ENCODE measurements at regions of chr12 and their contacts with region 1.

Region 1: DNA sequence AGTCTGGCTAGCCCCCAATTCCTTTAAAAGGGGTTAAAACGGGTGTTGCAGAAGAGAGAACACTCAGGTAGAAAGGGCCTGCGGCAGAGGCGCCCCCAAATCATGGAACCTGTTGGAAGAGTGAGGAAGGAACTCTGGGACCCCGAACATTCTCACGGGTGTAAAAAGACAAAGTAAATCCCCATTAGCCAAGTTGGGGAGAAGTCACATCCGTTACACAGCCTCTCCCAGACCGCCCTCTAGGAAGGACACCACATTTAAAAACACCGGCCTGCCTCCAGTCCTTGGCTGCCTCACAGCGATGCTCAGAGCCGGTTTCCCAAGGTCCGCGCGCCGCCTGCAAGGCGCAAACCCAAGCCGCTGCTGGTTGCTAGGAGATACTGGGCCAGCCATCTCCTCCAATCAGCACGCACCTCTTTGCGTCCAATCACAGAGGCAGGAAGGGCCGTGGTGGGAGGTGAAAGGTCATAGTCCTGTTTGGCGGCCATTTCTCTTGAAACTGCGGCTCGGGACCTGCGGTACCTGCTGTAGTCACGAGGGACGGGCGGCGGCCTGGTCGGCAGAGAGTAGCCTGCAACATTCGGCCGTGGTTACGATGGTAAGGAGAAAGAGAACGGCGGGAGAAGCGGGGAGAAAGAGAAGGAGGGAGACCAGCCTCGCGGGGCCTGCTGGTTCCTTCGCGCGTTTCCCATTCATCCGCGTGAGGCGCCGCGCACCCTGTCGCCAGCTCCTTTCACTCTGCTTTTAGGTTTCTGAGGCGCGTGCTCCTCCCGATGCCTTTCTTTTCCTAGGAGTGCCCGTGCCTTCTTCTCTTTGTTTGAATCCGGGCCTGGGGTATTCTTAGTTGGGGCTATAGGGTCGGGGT is at the start of gene SNRPF:
- DNase-seq: peak; percentile 91 to 97
- H3K4me3 ChIP-seq: peak within 1 kb of the TSS; percentile 96 to 98 (median 97)
- H3K27ac ChIP-seq: peak within 1 kb of the TSS; percentile 89
- H3K4me1 ChIP-seq: peaks cover 0 to 4% (median 2%) of the 10 kb centered on the region in 4 experiments; a peak in 3 of 7 replicates
- H3K27me3 ChIP-seq: no peaks in the 10 kb centered on the region
- CTCF ChIP-seq: peak in 1 of 3 experiments; percentile 6; a peak in 1 of 4 replicates
- EP300 ChIP-seq: no peak
- POLR2A ChIP-seq: peak; percentile 62 to 87
- RAD21 ChIP-seq: 0 out of 4 replicates have a peak, but pooled peaks have one; percentile 2 to 5
- total RNA-seq, gene SNRPF: 79.7 and 87.7 TPM in 2 replicates

Region 2: DNA sequence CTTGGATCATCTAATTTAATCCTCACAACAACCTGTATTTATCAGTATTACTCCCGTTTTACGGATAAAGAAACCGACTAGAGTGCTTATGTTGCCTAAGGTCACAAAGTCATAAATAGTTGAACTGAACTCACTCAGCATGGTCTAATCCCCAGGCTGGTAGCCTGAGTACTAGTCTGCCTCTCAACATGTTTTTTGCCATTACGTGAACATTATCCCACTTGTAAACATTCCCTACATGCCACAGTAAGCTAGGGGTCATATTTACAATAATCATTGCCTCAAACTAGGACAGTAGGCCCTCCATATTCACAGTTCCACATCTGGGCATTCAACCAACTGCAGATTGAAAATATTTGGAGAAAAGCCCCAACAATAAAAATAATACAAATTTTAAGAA is 12.2 kb after region 1 on chr12:
- CTCF ChIA-PET with region 1: interaction called, 3 read pairs
- POLR2A ChIA-PET with region 1: interaction called, 53 read pairs
- DNase-seq: no peak
- H3K4me3 ChIP-seq: no peak overlapping the region
- H3K27ac ChIP-seq: no peak overlapping the region
- H3K4me1 ChIP-seq: peaks cover 0 to 11% (median 2%) of the 10 kb centered on the region in 4 experiments; a peak in 3 of 7 replicates
- H3K27me3 ChIP-seq: no peaks in the 10 kb centered on the region
- CTCF ChIP-seq: no peak
- EP300 ChIP-seq: no peak
- POLR2A ChIP-seq: no peak
- RAD21 ChIP-seq: no peak

Measured in H1 (cell line).